ENCODE measurements at regions of chr12 and their contacts with region 1.

Region 1: DNA sequence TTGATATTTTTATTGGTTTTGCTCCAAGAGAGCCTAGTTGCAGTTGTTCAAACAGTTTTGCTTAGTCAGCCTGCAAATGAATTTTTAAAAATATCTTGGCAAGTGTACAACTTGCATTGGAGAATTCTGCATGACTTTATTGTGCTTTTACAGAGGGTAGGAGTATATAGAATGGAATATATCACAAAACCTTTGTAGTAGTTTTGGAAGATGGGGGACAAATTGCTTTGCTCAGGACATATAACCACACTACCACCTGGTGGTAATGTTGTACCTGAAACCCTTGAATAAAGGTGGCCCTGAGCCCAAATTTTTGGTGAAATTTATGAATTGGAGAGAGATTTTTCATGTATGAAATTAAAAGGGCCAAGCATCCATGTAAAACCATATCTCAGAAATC is 645.2 kb downstream of the MED13L start:
- DNase-seq: no peak
- ATAC-seq: no peak

Region 2: GRCh38 chr12:114662512-114663177 is 969.7 kb before region 1 on chr12:
- intact Hi-C with region 1: loop called (anchors 10 kb)
- DNase-seq: peak; percentile 80
- ATAC-seq: peak; percentile 68